Esophagus squamous epithelium (tissue), 5 donors: ENCODE measurements at regions of chr11 and their contacts with region 1.

Region 1: GRCh38 chr11:9613118-9613829 is 39.8 kb downstream of the WEE1 start:
- DNase-seq: peak; percentile 45
- H3K4me3 ChIP-seq: peak overlapping the region; percentile 31 to 69 (median 49)
- H3K27ac ChIP-seq: peak overlapping the region; percentile 88 to 98 (median 96)
- H3K4me1 ChIP-seq: peaks cover 7 to 29% (median 14%) of the 10 kb centered on the region in 3 donors
- H3K27me3 ChIP-seq: no peaks in the 10 kb centered on the region
- CTCF ChIP-seq: peak; percentile 89 to 98 (median 97)
- POLR2A ChIP-seq: peak in 1 of 4 donors; percentile 60

Region 2: DNA sequence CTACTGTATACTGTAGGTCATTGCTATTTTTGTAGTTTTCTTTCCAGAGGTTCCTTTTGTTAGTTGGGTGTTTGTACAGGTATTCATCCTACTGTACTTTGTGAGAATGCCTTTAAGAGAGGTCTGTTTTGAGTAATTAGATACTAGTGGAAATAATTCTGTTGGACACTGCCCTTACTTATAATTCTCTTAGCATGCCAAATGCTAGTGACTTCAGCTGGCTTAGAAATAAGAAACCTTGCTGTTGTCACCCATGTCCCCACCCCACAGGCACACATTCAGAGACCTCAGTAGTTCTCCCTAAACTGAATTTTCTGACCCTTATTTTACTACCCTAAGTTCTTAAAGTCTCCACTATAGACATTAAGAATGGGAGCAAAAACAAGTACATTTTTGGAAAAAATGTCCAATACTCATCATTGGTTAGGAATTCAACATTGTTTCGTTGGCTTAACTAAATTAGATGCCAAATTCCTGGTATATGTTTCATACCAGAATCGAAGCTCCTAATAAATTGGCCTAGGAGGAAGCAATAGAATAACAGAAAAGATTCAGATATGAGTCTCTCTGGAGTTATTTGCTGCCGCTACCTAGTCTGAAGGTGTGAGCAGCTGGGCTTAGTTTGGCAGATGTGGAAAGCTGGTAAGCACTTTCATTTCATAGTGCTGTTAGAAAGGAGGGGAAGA is 124.1 kb before region 1 on chr11:
- intact Hi-C with region 1: no loop called
- DNase-seq: no peak
- H3K4me3 ChIP-seq: no peak overlapping the region
- H3K27ac ChIP-seq: no peak overlapping the region
- H3K4me1 ChIP-seq: no peaks in the 10 kb centered on the region
- H3K27me3 ChIP-seq: no peaks in the 10 kb centered on the region
- CTCF ChIP-seq: no peak
- POLR2A ChIP-seq: no peak

Region 3: DNA sequence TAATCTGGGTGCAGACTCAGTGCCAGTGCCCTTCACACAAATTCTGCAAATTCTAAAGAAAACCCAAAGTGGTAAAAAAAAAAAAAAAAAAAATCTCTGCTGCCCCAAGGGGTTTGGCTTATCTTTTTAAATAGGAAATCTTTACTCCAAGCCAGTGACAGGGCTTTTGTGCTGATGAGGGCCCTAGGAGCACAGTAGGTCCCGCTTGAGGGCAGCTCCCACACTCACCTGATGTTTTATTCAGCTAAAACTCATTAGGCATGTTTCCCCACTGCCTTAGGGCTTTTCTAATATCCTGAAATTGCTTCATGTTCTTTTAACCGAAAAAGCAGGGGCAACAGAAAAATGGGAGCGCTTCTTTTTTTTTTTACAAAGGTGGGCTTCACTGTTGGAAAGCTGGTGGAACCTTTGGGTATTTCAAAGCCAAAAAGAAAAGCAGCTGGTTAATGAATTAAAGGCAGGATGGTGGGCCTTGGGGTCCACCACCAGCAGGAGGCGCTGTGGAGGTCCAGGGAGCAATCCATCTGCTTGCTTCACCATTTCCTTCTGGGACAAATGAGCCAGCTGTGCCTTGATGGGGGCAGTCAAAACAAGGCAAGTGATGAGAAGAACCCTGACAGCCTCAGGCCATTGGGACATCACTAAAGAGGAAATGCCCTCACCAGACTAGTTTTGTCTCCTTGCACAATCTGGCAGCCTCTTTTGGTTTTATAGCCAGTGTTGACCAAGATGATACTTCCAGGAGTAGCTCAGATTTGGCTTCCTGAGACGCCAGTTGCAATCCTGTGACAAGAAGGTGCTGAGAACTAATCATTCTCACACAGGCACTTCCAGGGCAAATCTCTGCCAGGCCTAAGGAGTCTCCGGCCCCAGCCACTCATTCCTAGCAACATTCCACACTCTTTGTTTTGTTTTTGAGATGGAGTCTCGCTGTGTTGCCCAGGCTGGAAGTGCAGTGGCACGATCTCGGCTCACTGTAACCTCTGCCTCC is 78.2 kb before region 1 on chr11:
- intact Hi-C with region 1: loop called (anchors 5 kb)
- DNase-seq: no peak
- H3K4me3 ChIP-seq: no peak overlapping the region
- H3K27ac ChIP-seq: peak overlapping the region; percentile 43 to 88 (median 76)
- H3K4me1 ChIP-seq: peaks cover 14 to 52% (median 22%) of the 10 kb centered on the region in 3 donors
- H3K27me3 ChIP-seq: no peaks in the 10 kb centered on the region
- CTCF ChIP-seq: peak; percentile 77 to 88 (median 82)
- POLR2A ChIP-seq: no peak

Region 4: GRCh38 chr11:9745411-9746237 is 132.3 kb after region 1 on chr11:
- intact Hi-C with region 1: loop called (anchors 2 kb)
- DNase-seq: no peak
- H3K4me3 ChIP-seq: no peak overlapping the region
- H3K27ac ChIP-seq: no peak overlapping the region
- H3K4me1 ChIP-seq: peaks cover 0 to 34% (median 0%) of the 10 kb centered on the region in 3 donors
- H3K27me3 ChIP-seq: no peaks in the 10 kb centered on the region
- CTCF ChIP-seq: no peak
- POLR2A ChIP-seq: no peak